MCF 10A (cell line): ENCODE measurements at regions of chr5 and their contacts with region 1.

Region 1: DNA sequence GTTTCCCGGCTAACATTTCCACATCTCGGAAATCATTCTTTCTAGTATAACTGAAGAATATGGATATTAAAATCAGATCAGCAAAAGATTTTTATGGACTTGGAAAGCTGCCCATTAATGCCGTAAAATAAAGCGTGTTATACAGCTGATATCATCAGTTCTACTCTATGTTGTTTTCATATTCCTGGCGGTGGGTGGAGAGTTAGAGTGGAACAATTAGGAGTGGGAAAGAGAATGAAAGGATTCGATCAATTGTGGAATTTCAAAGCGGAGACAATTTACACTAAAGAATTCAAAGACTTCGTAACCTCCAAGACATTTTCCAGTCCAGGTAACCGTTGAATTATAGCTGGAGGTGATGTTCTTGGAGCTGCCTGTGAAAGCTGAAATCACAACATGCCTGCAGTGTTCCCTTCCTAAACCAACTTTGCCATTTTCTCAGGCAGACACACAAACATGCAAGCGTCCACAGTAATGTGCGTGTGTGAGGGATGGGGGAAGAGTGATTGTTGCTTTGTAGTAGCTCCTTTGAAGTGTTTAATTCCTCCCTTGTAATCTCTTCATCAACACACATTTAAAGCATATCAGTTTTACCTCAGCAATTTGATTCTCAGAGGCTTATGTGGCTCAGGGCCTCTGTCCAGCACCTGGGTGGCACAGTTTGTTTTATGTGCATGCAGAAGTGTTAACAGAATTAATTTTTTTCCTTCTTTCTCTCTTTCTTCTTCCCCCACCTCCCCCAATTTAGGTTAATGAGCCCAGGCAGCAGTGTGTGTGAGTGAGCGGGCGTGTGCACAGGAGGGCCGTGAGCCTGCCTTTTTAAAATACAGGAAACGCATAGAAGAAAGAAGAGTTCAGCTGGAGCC is 544.1 kb downstream of the RAB3C start:
- DNase-seq: peak; percentile 26
- H3K4me3 Mint-ChIP-seq: no peak overlapping the region
- H3K27ac Mint-ChIP-seq: no peak overlapping the region
- H3K4me1 Mint-ChIP-seq: no peaks in the 10 kb centered on the region
- H3K27me3 Mint-ChIP-seq: no peaks in the 10 kb centered on the region
- CTCF ChIP-seq: no peak

Region 2: GRCh38 chr5:58622936-58623871 is 503.7 kb before region 1 on chr5:
- CTCF ChIA-PET with region 1: no interaction called
- POLR2A ChIA-PET with region 1: no interaction called
- intact Hi-C with region 1: no loop called
- DNase-seq: no peak
- H3K4me3 Mint-ChIP-seq: no peak overlapping the region
- H3K27ac Mint-ChIP-seq: no peak overlapping the region
- H3K4me1 Mint-ChIP-seq: no peaks in the 10 kb centered on the region
- H3K27me3 Mint-ChIP-seq: peaks cover 72% of the 10 kb centered on the region
- CTCF ChIP-seq: no peak

Region 3: GRCh38 chr5:59086024-59086423 is 40.9 kb before region 1 on chr5:
- CTCF ChIA-PET with region 1: no interaction called
- POLR2A ChIA-PET with region 1: no interaction called
- intact Hi-C with region 1: no loop called
- DNase-seq: no peak
- H3K4me3 Mint-ChIP-seq: no peak overlapping the region
- H3K27ac Mint-ChIP-seq: no peak overlapping the region
- H3K4me1 Mint-ChIP-seq: no peaks in the 10 kb centered on the region
- H3K27me3 Mint-ChIP-seq: no peaks in the 10 kb centered on the region
- CTCF ChIP-seq: no peak

Region 4: GRCh38 chr5:59099270-59099994 is 27.5 kb before region 1 on chr5:
- CTCF ChIA-PET with region 1: no interaction called
- POLR2A ChIA-PET with region 1: interaction called, 8 read pairs
- intact Hi-C with region 1: loop called (anchors 1 kb)
- DNase-seq: peak; percentile 78
- H3K4me3 Mint-ChIP-seq: no peak overlapping the region
- H3K27ac Mint-ChIP-seq: peak overlapping the region; percentile 68
- H3K4me1 Mint-ChIP-seq: peaks cover 36% of the 10 kb centered on the region
- H3K27me3 Mint-ChIP-seq: no peaks in the 10 kb centered on the region
- CTCF ChIP-seq: no peak

Region 5: DNA sequence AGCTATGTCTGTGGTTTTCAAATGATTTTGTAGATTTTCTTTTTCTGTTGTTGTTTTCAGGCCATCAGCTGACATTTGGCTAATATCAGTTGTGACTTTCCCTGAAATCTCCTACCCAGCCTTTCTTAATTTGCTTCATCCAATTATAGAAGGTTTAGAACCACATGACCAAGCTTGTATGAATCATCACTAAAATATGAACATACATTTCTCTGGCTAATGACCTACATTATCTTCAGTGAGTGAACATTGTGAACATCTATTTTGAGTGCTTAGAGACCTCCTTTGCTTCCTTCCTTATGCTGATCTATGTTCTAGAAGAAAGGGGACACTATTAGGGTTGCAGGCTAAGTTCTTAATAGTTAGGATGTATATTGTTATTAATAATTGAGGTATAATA is 11.6 kb before region 1 on chr5:
- CTCF ChIA-PET with region 1: no interaction called
- POLR2A ChIA-PET with region 1: interaction called, 11 read pairs
- intact Hi-C with region 1: no loop called
- DNase-seq: no peak
- H3K4me3 Mint-ChIP-seq: no peak overlapping the region
- H3K27ac Mint-ChIP-seq: no peak overlapping the region
- H3K4me1 Mint-ChIP-seq: peaks cover 19% of the 10 kb centered on the region
- H3K27me3 Mint-ChIP-seq: no peaks in the 10 kb centered on the region
- CTCF ChIP-seq: no peak

Region 6: GRCh38 chr5:59436364-59437148 is 309.6 kb after region 1 on chr5:
- CTCF ChIA-PET with region 1: no interaction called
- POLR2A ChIA-PET with region 1: no interaction called
- intact Hi-C with region 1: no loop called
- DNase-seq: no peak
- H3K4me3 Mint-ChIP-seq: no peak overlapping the region
- H3K27ac Mint-ChIP-seq: no peak overlapping the region
- H3K4me1 Mint-ChIP-seq: no peaks in the 10 kb centered on the region
- H3K27me3 Mint-ChIP-seq: no peaks in the 10 kb centered on the region
- CTCF ChIP-seq: no peak

Region 7: DNA sequence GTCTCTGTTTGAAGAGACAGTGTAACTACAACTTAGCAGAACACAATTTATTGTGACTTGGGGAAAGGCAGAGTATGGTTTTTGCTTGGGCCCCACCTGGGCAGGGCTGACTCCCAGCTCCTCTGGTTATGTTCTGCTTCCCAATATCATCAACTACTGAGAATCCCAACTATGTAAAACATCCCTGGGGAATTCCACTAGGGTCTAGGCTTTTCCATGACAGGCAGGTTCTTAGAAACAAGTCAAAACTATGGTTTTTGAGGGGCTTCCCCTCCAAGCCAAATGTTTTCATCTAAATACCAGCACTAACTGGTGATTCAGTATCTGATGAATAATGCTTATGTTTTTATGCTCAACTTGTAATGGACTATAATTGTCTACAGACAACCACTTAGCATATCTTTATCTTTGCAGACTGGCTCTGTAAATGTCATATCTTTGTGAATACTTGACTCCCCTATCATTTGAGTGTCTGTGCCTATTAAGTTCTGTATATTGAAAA is 357.1 kb after region 1 on chr5:
- CTCF ChIA-PET with region 1: no interaction called
- POLR2A ChIA-PET with region 1: no interaction called
- intact Hi-C with region 1: no loop called
- DNase-seq: no peak
- H3K4me3 Mint-ChIP-seq: no peak overlapping the region
- H3K27ac Mint-ChIP-seq: peak overlapping the region; percentile 18
- H3K4me1 Mint-ChIP-seq: peaks cover 30% of the 10 kb centered on the region
- H3K27me3 Mint-ChIP-seq: no peaks in the 10 kb centered on the region
- CTCF ChIP-seq: no peak